ENCODE measurements at regions of chr15 and their contacts with region 1.

Region 1: DNA sequence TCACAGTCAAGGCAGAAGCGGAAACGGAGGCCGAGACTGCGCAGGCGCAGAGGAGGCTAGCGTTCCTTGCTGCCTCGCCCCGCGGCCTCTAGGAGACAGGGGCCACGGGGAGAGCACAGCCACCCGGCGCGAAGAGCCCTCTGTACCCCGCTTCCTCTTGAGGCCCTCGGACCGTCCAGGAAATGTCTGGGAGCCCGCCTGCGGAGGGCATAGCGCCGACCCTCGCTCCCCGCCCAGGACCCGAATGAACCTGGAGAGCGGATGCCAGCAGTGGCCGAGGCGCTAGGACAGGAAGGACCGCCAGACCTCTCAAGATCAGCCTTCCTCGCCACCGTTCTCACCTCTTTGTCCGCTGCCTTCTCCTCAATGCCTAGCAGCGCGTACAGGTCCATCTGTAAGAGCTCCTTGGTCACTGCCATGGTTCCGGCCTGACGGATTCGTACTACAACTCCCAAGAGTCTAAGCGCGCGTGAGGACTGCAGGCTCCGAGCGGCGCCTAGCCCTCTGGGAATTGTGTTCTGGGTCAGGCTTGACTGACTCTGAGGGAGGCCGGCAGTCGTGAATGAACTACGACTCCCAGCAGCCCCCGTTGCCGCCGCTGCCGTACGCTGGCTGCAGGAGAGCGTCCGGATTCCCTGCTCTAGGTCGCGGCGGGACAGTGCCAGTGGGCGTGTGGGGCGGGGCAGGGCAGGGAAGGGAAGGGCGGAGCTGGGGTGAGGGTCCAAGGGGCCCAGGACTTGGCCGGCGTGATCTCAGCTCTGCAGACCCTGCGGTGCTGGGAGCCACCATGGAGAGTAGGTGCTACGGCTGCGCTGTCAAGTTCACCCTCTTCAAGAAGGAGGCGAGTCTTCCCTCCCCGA is at the starts of genes DNAJC17 and ZFYVE19:
- DNase-seq: peak; percentile 97
- H3K4me3 Mint-ChIP-seq: peak within 1 kb of the TSS; percentile 90
- H3K27ac Mint-ChIP-seq: peak within 1 kb of the TSS; percentile 98
- H3K4me1 Mint-ChIP-seq: peaks cover 29% of the 10 kb centered on the region
- H3K27me3 Mint-ChIP-seq: no peaks in the 10 kb centered on the region
- total RNA-seq, gene DNAJC17: 42.2 to 44.3 TPM
- total RNA-seq, gene ZFYVE19: 31.1 to 32.2 TPM

Region 2: GRCh38 chr15:40121911-40122638 is 685.2 kb before region 1 on chr15:
- CTCF ChIA-PET with region 1: no interaction called
- POLR2A ChIA-PET with region 1: interaction called, 12 read pairs
- DNase-seq: no peak
- H3K4me3 Mint-ChIP-seq: no peak overlapping the region
- H3K27ac Mint-ChIP-seq: no peak overlapping the region
- H3K4me1 Mint-ChIP-seq: peaks cover 2% of the 10 kb centered on the region
- H3K27me3 Mint-ChIP-seq: peaks cover 10% of the 10 kb centered on the region

Region 3: GRCh38 chr15:40754883-40755811 is 52.1 kb before region 1 on chr15 and contains the start of gene RMDN3:
- CTCF ChIA-PET with region 1: interaction called, 10 read pairs
- POLR2A ChIA-PET with region 1: no interaction called
- DNase-seq: peak; percentile 94
- H3K4me3 Mint-ChIP-seq: peak within 1 kb of the TSS; percentile 90
- H3K27ac Mint-ChIP-seq: peak within 1 kb of the TSS; percentile 98
- H3K4me1 Mint-ChIP-seq: peaks cover 38% of the 10 kb centered on the region
- H3K27me3 Mint-ChIP-seq: no peaks in the 10 kb centered on the region
- total RNA-seq, gene RMDN3: 26.0 to 32.6 TPM

Measured in activated CD4-positive, alpha-beta T cell treated with anti-CD3 and anti-CD28 coated beads, Interleukin-2, amount 10 ng/mL, durations not matched to agents 7 days and 5 days (primary cell).